ENCODE measurements at regions of chr14 and their contacts with region 1.

Region 1: DNA sequence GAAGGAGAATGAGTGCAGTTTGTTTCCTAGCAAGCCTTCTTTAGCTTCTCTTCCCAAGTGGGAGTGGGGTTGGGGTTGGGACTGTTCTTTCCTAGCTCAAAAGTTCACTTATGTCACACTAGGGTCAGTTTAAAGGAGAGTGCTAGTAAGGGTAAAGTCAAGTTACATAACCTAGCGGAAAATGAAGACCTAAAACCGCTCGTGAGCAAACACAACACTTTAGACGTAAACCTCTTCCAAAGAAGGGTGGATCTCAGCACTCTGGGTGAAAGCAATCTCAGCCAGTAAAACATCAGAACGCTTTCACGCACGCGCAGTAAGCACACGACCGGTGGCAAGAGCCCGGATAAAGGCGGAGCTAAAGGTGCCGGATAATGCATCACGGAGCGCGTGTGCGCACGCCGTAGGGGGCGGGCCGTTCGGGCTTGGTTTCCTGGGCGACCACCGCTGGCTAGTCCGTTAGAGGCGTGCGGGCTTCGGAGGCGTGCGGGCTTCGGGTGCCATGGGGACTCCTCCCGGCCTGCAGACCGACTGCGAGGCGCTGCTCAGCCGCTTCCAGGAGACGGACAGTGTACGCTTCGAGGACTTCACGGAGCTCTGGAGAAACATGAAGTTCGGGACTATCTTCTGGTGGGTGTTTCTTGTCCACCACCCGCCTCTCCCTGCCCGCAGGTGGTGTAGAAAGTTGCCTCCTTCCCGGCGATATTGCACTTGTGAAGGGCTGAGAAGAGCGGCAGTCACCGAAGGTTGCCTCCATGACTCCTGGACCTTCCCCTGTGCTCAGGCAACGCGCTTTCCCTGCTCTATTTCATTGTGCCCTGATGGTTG is at the start of gene SNAPC1:
- DNase-seq: peak; percentile 98
- H3K4me3 ChIP-seq: peak within 1 kb of the TSS; percentile 59 to 91 (median 74)
- H3K27ac ChIP-seq: peak within 1 kb of the TSS; percentile 79 to 85 (median 84)
- H3K4me1 ChIP-seq: peaks cover 14 to 40% (median 38%) of the 10 kb centered on the region in 4 donors
- H3K27me3 ChIP-seq: no peaks in the 10 kb centered on the region
- CTCF ChIP-seq: no peak
- EP300 ChIP-seq: no peak
- POLR2A ChIP-seq: peak; percentile 55
- total RNA-seq, gene SNAPC1: 4.7 to 8.0 (median 6.6) TPM

Region 2: GRCh38 chr14:61694830-61695694 is 67.1 kb before region 1 on chr14 and contains the start of gene HIF1A:
- intact Hi-C with region 1: loop called (anchors 5 kb)
- DNase-seq: peak; percentile 98
- H3K4me3 ChIP-seq: peak within 1 kb of the TSS; percentile 77 to 98 (median 88)
- H3K27ac ChIP-seq: peak within 1 kb of the TSS; percentile 88 to 100 (median 96)
- H3K4me1 ChIP-seq: peaks cover 15 to 40% (median 37%) of the 10 kb centered on the region in 4 donors
- H3K27me3 ChIP-seq: no peaks in the 10 kb centered on the region
- CTCF ChIP-seq: peak in 2 of 3 experiments; percentile 12 to 31
- EP300 ChIP-seq: no peak
- POLR2A ChIP-seq: peak; percentile 93
- total RNA-seq, gene HIF1A: 77.4 to 156 (median 86.5) TPM

Region 3: DNA sequence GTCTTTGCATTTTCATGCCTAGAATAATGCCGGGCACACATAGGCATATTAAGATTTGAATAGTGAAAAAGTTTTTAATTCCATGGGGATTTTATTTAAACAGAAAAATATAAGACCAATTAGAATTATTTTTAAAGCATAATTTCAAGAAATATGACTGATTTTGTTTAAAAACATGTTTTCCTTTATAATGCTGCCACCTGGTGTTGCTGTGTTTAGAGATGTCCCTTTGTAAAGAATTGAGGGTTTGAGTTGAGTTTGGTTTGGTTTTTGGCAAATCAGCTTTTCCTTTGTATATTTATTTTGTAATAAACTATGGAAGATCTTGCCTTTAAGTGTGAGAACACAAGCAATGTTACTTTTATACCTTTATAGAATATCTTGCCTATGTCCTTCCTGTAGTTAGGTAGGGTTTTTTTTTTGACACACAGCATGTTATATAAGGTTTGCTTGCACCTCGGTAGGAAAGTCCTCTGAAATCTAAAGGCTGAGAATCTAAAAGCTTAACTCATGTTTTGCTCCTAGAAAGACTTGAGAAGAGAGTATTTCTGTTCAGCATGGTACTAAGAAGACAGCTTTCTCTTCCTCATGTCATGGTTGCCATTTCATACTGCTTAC is 31.3 kb before region 1 on chr14:
- intact Hi-C with region 1: no loop called
- DNase-seq: no peak
- H3K4me3 ChIP-seq: no peak overlapping the region
- H3K27ac ChIP-seq: peak overlapping the region in 3 of 4 donors; percentile 1 to 38 (median 17)
- H3K4me1 ChIP-seq: peaks cover 0 to 18% (median 10%) of the 10 kb centered on the region in 4 donors
- H3K27me3 ChIP-seq: no peaks in the 10 kb centered on the region
- CTCF ChIP-seq: peak; percentile 45 to 66 (median 58)
- EP300 ChIP-seq: no peak
- POLR2A ChIP-seq: no peak

Region 4: GRCh38 chr14:62143245-62143644 is 381.1 kb after region 1 on chr14:
- intact Hi-C with region 1: no loop called
- DNase-seq: no peak
- H3K4me3 ChIP-seq: no peak overlapping the region
- H3K27ac ChIP-seq: no peak overlapping the region
- H3K4me1 ChIP-seq: no peaks in the 10 kb centered on the region
- H3K27me3 ChIP-seq: no peaks in the 10 kb centered on the region
- CTCF ChIP-seq: no peak
- EP300 ChIP-seq: no peak
- POLR2A ChIP-seq: no peak